K562 (cell line): ENCODE measurements at regions of chr1 and their contacts with region 1.

Region 1: DNA sequence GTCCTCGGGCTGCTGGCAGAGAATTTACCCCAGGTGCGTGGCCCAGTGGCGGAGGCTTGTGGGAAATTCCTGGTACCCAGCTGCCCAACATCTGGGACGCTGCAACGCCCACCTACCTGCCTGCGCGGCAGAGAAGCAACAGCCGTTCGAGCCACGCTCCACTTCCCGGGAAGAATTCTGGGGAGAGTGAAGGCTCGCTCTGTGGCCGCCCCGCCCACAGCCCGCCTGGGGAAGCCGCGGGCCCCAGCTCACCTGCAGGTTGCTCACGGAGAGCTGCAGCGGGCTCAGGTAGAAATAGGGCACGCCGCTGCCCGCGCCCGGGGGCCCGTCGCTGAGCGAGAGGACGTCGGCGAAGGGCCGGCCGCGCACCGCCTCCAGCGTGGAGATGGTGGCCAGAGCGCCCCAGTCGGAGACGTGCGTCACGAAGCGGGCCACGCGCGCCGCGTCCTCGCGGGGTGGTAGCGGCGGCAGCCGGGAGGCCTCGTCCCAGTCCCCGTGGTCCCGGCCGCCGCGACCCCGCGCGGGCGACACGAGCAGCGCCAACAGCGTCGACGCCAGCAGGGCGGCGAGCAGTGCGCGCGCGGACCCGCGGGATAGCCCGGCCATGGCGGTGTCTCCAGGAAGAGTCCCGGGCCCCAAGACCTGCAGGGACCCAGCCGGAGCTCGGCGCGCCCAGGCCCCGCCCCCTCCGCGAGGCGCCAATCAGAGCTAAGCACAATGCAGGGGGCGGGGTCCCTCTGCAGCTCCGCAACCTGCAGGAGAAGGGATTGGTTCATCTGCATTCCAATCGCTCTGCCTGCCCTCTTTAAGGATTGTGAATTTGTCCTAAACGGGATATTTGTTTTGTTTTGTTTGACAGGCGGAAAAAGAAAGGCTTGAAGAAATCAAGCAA is at the start of gene CREG1:
- DNase-seq: peak; percentile 98 to 99 (median 98)
- ATAC-seq: peak; percentile 93
- H3K4me3 ChIP-seq: peak within 1 kb of the TSS; percentile 73
- H3K27ac ChIP-seq: peak within 1 kb of the TSS; percentile 70
- H3K4me1 ChIP-seq: peaks cover 23 to 45% of the 10 kb centered on the region in 2 experiments
- H3K27me3 ChIP-seq: no peaks in the 10 kb centered on the region
- CTCF ChIP-seq: peak in 2 of 3 experiments; percentile 24 to 41; a peak in 2 of 6 replicates
- EP300 ChIP-seq: 0 out of 2 replicates have a peak, but pooled peaks have one; percentile 9
- POLR2A ChIP-seq: peak; percentile 82
- RAD21 ChIP-seq: peak in 1 of 2 experiments; percentile 12; a peak in 1 of 4 replicates
- polyA plus RNA-seq, gene CREG1: 45.7 to 58.2 TPM

Region 2: DNA sequence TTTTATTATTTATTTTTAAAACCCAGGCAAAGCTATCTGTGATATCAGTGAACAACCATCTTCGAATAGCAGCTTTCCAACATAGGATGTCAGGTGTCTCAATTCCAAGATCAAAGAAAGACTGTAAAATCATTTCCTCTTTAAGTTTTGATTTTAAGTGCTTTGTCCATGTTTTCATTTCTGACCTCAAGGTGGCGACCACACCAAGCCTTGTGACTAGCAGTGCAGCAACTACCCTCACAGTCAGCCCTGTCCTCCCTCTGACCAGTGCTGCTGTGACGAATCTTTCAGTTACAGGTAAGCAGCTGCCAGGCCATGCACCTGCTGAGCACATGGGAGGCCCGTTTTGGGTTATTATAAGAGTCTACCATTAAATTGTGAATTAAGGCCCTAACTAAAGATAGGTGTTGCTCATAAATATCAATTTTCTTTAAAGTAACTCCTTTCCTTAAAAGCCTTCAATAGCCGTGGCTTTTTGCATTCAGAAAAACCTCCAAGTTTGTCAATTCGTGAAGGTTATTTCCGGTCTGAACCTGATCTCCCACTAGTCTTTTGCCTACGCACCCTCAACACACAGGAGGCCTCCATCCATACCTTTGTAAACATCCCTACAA is 152.0 kb before region 1 on chr1:
- CTCF ChIA-PET with region 1: interaction called, 8 read pairs
- POLR2A ChIA-PET with region 1: no interaction called
- in situ Hi-C with region 1: no loop called
- intact Hi-C with region 1: loop called (anchors 5 kb)
- DNase-seq: peak; percentile 38 to 78 (median 58)
- ATAC-seq: peak; percentile 99
- H3K4me3 ChIP-seq: no peak overlapping the region
- H3K27ac ChIP-seq: no peak overlapping the region
- H3K4me1 ChIP-seq: no peaks in the 10 kb centered on the region
- H3K27me3 ChIP-seq: no peaks in the 10 kb centered on the region
- CTCF ChIP-seq: peak; percentile 75 to 91 (median 86)
- EP300 ChIP-seq: no peak
- POLR2A ChIP-seq: no peak
- RAD21 ChIP-seq: peak; percentile 89

Region 3: GRCh38 chr1:167520711-167521206 is 32.6 kb before region 1 on chr1:
- CTCF ChIA-PET with region 1: no interaction called
- POLR2A ChIA-PET with region 1: interaction called, 3 read pairs
- in situ Hi-C with region 1: no loop called
- intact Hi-C with region 1: loop called (anchors 2 kb)
- DNase-seq: peak in 1 of 4 experiments; percentile 33
- ATAC-seq: no peak
- H3K4me3 ChIP-seq: no peak overlapping the region
- H3K27ac ChIP-seq: no peak overlapping the region
- H3K4me1 ChIP-seq: peaks cover 9 to 12% of the 10 kb centered on the region in 2 experiments; a peak in 4 of 5 replicates
- H3K27me3 ChIP-seq: no peaks in the 10 kb centered on the region
- CTCF ChIP-seq: peak; percentile 32 to 46 (median 38); a peak in 3 of 6 replicates
- EP300 ChIP-seq: no peak
- POLR2A ChIP-seq: no peak
- RAD21 ChIP-seq: peak; percentile 17 to 69; a peak in 3 of 4 replicates

Region 4: DNA sequence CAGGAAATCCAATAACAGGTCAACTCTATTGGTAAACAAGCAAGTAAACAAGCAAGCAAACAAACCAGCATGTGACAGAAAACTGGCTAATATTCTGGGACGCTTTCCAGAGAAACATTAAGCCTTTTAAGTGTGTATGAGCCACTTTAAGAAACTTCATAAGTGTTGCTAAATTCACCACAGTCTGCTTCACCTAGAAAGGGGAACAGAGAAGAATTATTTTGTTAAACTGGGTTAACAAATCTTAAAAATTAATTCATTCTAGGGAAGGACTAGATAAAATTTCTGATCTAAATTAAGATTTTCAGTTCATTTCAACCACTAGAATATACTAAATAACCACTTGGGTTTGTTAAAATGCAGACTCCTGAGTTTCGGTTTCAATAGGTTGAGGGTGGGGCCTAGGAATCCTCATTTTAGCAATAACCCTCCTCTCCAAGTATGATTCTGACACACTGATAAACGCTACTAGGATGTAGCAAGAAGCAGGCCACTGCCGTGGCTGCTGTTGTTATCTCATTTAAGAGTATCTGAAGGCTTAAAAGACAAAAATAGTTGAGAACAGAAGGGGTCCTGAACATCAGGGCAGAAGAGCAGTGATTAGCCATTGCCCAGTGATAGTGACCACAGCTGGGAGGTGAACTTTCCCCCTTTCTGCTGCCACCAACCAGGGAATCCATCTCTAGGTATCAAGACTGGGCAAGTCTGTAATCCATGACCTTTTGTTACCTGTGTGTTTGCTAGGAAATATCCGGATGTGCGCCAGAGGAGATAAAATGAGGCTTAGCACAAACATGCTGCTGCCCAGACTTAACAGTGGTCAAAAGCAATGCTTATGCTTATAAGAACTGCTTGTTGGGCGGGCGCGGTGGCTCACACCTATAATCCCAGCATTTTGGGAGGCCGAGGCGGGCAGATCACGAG is 11.0 kb before region 1 on chr1:
- CTCF ChIA-PET with region 1: no interaction called
- POLR2A ChIA-PET with region 1: interaction called, 71 read pairs
- in situ Hi-C with region 1: no loop called
- intact Hi-C with region 1: loop called (anchors 2 kb)
- DNase-seq: peak in 1 of 4 experiments; percentile 13
- ATAC-seq: peak; percentile 8; the same call in 2 of the 3 replicates
- H3K4me3 ChIP-seq: no peak overlapping the region
- H3K27ac ChIP-seq: no peak overlapping the region
- H3K4me1 ChIP-seq: peaks cover 16 to 24% of the 10 kb centered on the region in 2 experiments; a peak in 4 of 5 replicates
- H3K27me3 ChIP-seq: no peaks in the 10 kb centered on the region
- CTCF ChIP-seq: no peak
- EP300 ChIP-seq: no peak
- POLR2A ChIP-seq: no peak
- RAD21 ChIP-seq: no peak

Region 5: DNA sequence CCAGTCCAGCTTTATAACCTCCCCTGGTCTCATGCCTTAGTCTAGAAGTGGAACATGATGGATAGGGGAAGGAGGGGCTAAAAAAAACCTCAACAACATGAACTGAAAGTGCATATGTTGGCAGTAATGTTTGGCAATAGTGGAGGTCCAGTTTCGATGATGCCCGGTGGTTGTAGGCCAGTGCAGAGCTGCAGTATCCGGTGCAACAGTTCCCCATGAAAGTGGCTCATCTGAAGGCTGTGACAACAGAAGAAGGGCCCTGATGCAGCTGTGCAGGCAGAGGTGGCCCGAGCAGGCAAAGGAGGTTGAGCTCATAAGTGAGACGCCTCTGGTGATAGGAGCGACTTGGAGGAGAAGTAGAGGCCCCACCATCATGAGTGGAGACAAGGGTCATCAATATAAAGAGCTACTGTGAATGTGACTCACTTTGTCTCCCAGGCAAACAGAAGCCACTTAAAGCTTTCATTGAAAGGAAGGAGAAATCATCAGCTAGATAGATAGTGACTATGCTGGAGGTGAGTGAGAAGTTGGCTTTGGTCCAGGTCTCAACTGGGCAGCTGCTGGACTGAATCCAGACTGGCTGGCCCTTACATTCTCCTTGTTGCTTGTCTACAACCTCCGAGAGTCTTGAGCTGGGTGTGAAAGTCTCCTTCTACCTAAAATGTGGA is 10.3 kb after region 1 on chr1:
- CTCF ChIA-PET with region 1: no interaction called
- POLR2A ChIA-PET with region 1: interaction called, 42 read pairs
- in situ Hi-C with region 1: no loop called
- intact Hi-C with region 1: no loop called
- DNase-seq: peak; percentile 64 to 79 (median 69)
- ATAC-seq: peak; percentile 81
- H3K4me3 ChIP-seq: no peak overlapping the region
- H3K27ac ChIP-seq: 0 out of 3 replicates have a peak overlapping the region, but pooled peaks have one; percentile 8
- H3K4me1 ChIP-seq: peaks cover 10 to 25% of the 10 kb centered on the region in 2 experiments
- H3K27me3 ChIP-seq: no peaks in the 10 kb centered on the region
- CTCF ChIP-seq: no peak
- EP300 ChIP-seq: no peak
- POLR2A ChIP-seq: no peak
- RAD21 ChIP-seq: no peak

Region 6: GRCh38 chr1:167748906-167749305 is 195.5 kb after region 1 on chr1:
- CTCF ChIA-PET with region 1: no interaction called
- POLR2A ChIA-PET with region 1: no interaction called
- in situ Hi-C with region 1: no loop called
- intact Hi-C with region 1: no loop called
- DNase-seq: no peak
- ATAC-seq: no peak
- H3K4me3 ChIP-seq: no peak overlapping the region
- H3K27ac ChIP-seq: peak overlapping the region; percentile 4; the same call in 1 of the 3 replicates
- H3K4me1 ChIP-seq: peaks cover 9 to 28% of the 10 kb centered on the region in 2 experiments
- H3K27me3 ChIP-seq: no peaks in the 10 kb centered on the region
- CTCF ChIP-seq: no peak
- EP300 ChIP-seq: no peak
- POLR2A ChIP-seq: no peak
- RAD21 ChIP-seq: no peak